ENCODE measurements at regions of chr2 and their contacts with region 1.

Region 1: DNA sequence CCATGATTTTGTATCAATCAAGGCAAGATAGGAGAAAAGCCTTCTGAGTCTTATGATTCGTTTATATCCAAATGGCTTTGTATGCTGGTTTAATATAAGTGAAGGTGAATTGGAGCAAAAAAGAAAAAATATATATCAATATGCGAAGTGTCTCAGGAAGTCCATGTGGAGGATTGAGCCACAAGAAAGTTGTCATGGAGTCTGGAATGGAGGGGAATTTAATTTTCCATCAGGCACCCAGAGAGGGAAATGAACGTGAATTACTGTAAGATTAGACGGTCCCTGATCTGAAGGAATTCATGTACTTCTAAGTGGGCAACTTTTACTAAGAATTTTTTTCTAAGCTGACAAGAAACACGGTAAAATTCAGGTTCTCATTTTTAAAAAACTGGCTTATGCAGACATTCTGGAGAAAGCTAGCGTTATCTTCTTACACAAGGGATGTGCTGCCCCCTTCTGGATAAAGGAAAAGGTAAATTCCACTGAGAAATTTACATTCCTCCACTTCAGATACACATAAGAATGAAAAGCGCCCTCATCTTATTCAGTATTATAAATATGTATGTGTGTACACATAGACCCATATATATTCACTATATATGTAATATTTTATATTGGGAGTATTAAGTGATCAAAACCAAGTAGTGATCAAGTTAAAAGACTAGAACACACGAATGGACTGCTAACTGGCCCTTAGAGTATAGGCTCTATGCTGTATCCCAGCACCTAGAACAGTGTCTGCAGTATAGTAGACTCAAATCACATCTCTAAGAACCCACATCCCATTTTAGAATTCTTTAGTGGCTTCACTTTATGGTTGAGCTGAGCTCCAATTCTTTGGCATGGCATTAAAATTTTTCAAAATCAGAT is 289.0 kb upstream of the TFPI start:
- DNase-seq: peak; percentile 74
- H3K4me3 Mint-ChIP-seq: no peak overlapping the region
- H3K27ac Mint-ChIP-seq: no peak overlapping the region
- H3K4me1 Mint-ChIP-seq: no peaks in the 10 kb centered on the region
- H3K27me3 Mint-ChIP-seq: no peaks in the 10 kb centered on the region
- CTCF ChIP-seq: peak; percentile 56

Region 2: DNA sequence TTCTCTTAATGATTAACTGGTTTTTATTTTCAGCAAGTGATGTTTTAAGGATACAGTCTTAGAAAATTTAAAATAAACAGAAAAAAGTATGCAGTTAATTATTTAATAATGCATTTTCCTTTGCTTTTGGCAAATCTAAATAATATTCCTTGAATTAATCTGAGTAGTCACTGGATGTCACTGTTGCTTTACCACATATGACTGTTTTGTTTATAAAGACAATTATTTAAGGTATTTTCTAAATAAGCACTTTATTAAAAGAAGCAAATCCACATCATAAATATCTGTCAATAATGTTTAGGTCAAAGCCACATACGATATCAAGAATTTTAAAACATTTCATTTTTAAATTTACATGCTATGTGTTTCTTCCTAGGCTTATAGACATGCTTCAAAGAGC is 248.4 kb before region 1 on chr2:
- CTCF ChIA-PET with region 1: interaction called, 38 read pairs
- POLR2A ChIA-PET with region 1: no interaction called
- intact Hi-C with region 1: loop called (anchors 1 kb)
- DNase-seq: no peak
- H3K4me3 Mint-ChIP-seq: no peak overlapping the region
- H3K27ac Mint-ChIP-seq: no peak overlapping the region
- H3K4me1 Mint-ChIP-seq: peaks cover 6% of the 10 kb centered on the region
- H3K27me3 Mint-ChIP-seq: no peaks in the 10 kb centered on the region
- CTCF ChIP-seq: peak; percentile 31

Region 3: DNA sequence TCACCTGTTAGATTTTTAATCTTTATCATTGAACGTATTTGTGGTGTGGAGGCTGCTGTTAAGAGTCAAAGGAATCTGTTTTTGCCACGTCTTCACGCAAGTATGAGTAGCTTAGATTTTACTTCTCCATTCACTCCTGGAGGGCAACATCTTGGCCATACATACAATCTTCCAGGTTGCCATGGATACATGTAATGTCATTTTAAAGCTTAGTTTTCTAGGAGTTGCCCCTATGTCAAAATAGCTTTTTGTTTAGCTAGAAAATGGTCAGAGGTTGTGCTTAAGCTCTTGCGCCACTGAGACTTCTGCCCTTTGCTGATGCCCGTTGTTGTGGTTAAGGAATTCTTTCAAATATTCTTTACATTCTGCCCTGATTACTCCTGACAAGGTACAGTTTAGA is 43.6 kb before region 1 on chr2:
- CTCF ChIA-PET with region 1: no interaction called
- POLR2A ChIA-PET with region 1: no interaction called
- intact Hi-C with region 1: no loop called
- DNase-seq: no peak
- H3K4me3 Mint-ChIP-seq: no peak overlapping the region
- H3K27ac Mint-ChIP-seq: no peak overlapping the region
- H3K4me1 Mint-ChIP-seq: no peaks in the 10 kb centered on the region
- H3K27me3 Mint-ChIP-seq: no peaks in the 10 kb centered on the region
- CTCF ChIP-seq: no peak

Region 4: DNA sequence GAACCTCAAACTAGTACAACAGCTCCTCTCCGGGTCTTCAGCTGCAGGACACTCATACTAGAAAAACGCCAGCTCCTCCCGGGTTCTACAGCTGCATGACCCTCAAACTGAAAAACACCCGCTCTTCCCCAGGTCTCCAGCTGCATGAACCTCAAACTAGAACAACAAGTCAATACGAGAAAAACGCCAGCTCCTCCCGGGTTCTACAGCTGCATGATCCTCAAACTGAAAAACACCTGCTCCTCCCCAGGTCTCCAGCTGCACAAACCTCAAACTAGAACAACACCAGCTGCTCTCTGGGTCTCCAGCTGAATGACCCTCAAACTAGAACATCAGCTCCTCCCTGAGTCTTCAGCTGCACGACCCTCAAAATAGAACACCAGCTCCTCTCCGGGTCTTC is 26.0 kb after region 1 on chr2:
- CTCF ChIA-PET with region 1: interaction called, 12 read pairs
- POLR2A ChIA-PET with region 1: no interaction called
- intact Hi-C with region 1: no loop called
- DNase-seq: no peak
- H3K4me3 Mint-ChIP-seq: no peak overlapping the region
- H3K27ac Mint-ChIP-seq: no peak overlapping the region
- H3K4me1 Mint-ChIP-seq: no peaks in the 10 kb centered on the region
- H3K27me3 Mint-ChIP-seq: no peaks in the 10 kb centered on the region
- CTCF ChIP-seq: no peak

Region 5: DNA sequence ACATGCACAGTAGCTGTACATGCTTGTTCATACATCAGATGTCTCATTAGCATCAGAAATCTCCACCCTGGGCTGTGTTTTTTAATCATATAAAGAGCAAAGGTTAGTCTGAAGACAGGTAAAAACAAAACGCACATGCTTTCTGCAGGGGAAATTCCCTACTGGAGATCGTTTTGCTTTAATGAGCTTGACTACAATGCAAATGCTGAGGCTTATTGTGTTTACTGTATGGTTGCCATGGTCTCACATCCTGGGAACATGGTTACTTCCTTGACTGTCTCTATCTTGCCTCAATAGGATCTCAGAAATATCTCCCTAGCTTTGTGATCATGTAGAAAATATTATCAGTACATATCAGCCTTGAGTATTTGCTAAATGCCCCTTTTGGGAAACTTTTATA is 47.5 kb after region 1 on chr2:
- CTCF ChIA-PET with region 1: no interaction called
- POLR2A ChIA-PET with region 1: no interaction called
- intact Hi-C with region 1: no loop called
- DNase-seq: no peak
- H3K4me3 Mint-ChIP-seq: no peak overlapping the region
- H3K27ac Mint-ChIP-seq: no peak overlapping the region
- H3K4me1 Mint-ChIP-seq: no peaks in the 10 kb centered on the region
- H3K27me3 Mint-ChIP-seq: no peaks in the 10 kb centered on the region
- CTCF ChIP-seq: no peak

Region 6: DNA sequence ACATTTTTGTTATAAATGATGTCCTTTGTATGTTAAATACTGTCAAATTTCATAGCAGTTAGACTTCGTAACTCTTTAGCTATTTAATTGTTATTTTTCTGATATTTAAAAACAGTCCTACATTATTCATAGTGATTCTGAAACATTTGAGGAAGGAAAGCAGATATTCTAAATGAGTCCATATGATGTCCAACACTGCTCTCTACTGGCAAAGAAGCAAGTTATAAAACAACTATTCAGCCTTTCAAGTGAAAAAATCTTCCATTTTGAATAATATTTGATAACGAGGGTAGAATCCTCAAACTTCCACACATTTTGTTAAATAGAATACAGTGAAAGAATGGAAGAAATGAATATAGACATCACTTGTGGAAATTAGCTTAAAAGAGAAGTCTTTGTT is 669.2 kb after region 1 on chr2:
- CTCF ChIA-PET with region 1: interaction called, 3 read pairs
- POLR2A ChIA-PET with region 1: no interaction called
- intact Hi-C with region 1: loop called (anchors 1 kb)
- DNase-seq: peak; percentile 54
- H3K4me3 Mint-ChIP-seq: no peak overlapping the region
- H3K27ac Mint-ChIP-seq: no peak overlapping the region
- H3K4me1 Mint-ChIP-seq: no peaks in the 10 kb centered on the region
- H3K27me3 Mint-ChIP-seq: no peaks in the 10 kb centered on the region
- CTCF ChIP-seq: peak; percentile 62

Measured in MCF 10A (cell line).